ENCODE measurements at regions of chr11 and their contacts with region 1.

Region 1: DNA sequence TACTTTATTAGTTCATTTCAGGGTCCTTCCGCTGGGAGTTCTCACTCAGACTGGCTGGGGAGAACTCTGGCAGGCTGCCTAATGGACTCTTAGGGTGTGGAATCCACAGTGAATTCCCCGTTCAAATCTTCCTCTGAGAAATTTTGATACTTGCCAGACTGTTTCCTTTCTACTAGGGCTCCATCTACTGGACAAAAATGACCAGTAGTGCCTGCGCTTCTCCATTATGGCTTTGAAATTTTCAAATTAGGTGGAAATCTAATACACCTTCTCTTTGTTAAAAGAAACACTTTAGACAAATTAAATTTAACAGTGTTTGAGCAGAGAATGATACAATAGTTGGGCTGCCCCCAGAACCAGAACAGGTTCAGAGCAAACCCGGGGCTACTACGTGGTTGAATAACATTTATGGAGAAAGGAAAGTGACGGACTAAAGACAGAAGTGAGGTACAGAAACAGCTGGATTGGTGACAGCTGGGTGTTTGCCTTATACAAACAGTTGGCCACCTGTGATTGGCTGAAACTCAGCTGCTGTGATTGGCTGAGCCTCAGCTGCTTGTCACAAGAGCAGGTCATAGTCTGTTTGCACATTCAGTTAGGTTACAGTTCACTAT is 52.9 kb upstream of the FDX1 start:
- DNase-seq: peak; percentile 71
- H3K4me3 ChIP-seq: no peak overlapping the region
- H3K27ac ChIP-seq: no peak overlapping the region
- H3K4me1 ChIP-seq: no peaks in the 10 kb centered on the region
- H3K27me3 ChIP-seq: no peaks in the 10 kb centered on the region
- CTCF ChIP-seq: peak; percentile 68

Region 2: GRCh38 chr11:110195845-110196754 is 180.7 kb before region 1 on chr11:
- intact Hi-C with region 1: loop called (anchors 2 kb)
- DNase-seq: no peak
- H3K4me3 ChIP-seq: no peak overlapping the region
- H3K27ac ChIP-seq: no peak overlapping the region
- H3K4me1 ChIP-seq: no peaks in the 10 kb centered on the region
- H3K27me3 ChIP-seq: no peaks in the 10 kb centered on the region
- CTCF ChIP-seq: no peak

Measured in colonic mucosa (tissue), 4 donors.